Activated CD4-positive, alpha-beta T cell treated with anti-CD3 and anti-CD28 coated beads, Interleukin-2, amount 10 ng/mL, durations not matched to agents 24 days and 14 days (primary cell): ENCODE measurements at regions of chr12 and their contacts with region 1.

Region 1: DNA sequence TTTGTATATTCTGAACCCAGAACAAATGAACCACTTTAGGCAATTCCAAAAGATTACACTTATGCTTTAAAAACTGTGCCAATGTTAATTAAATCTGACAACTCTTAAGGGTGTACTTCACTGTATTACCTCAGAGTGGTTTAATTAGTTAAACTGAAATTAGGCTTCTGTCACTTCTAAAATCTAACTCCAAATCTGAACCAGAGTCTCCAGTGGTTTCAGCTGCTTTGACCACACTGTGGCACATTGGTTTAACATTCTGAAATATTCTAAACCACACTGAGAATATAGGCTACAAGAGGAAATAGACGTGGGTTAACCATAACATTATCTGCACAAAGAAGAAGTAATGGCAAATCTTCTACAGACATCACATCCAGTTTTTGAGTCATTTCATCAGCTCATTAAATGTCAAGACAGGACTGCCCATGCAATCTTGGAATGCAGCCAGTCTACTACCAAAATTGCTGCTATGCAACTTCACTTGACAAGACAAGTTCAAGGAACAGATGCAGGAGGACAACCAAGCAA is 94.8 kb downstream of the LRP6 start:
- DNase-seq: peak; percentile 74
- H3K4me3 Mint-ChIP-seq: no peak overlapping the region
- H3K27ac Mint-ChIP-seq: peak overlapping the region; percentile 64
- H3K4me1 Mint-ChIP-seq: peaks cover 12% of the 10 kb centered on the region
- H3K27me3 Mint-ChIP-seq: peaks cover 51% of the 10 kb centered on the region

Region 2: DNA sequence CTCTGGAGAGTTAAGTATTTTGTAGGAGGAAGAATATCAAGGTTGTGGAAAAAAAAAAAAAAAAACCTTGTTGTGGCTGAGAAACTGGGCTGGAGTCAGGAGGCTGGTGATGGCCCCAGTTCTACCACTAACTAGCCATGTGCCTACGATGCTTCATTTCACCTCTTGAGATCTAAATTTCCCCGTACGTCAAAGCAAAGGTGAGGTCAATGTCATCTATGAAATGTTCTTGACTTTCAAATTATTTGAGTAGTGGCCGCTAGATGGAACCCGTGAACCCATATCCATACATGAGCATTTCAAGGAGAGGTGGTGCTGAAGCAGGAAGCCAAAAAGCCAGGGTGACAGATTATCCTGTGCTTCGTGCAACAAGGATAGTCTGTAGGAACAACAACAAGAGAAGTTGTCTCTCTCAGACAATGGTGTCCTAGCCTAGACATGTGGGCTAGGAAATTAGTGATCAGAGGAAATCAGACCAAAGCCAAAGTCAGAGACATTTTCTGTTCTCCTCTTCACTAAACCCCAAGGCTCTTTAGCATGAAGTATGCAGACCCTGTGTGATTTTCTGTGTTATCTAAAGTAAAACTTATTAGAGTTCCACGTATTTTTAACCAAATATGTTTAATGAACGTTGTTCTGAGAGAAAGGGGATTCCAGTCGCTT is 618.1 kb before region 1 on chr12:
- intact Hi-C with region 1: loop called (anchors 10 kb)
- DNase-seq: peak; percentile 88
- H3K4me3 Mint-ChIP-seq: peak overlapping the region; percentile 26
- H3K27ac Mint-ChIP-seq: no peak overlapping the region
- H3K4me1 Mint-ChIP-seq: peaks cover 22% of the 10 kb centered on the region
- H3K27me3 Mint-ChIP-seq: peaks cover 18% of the 10 kb centered on the region

Region 3: DNA sequence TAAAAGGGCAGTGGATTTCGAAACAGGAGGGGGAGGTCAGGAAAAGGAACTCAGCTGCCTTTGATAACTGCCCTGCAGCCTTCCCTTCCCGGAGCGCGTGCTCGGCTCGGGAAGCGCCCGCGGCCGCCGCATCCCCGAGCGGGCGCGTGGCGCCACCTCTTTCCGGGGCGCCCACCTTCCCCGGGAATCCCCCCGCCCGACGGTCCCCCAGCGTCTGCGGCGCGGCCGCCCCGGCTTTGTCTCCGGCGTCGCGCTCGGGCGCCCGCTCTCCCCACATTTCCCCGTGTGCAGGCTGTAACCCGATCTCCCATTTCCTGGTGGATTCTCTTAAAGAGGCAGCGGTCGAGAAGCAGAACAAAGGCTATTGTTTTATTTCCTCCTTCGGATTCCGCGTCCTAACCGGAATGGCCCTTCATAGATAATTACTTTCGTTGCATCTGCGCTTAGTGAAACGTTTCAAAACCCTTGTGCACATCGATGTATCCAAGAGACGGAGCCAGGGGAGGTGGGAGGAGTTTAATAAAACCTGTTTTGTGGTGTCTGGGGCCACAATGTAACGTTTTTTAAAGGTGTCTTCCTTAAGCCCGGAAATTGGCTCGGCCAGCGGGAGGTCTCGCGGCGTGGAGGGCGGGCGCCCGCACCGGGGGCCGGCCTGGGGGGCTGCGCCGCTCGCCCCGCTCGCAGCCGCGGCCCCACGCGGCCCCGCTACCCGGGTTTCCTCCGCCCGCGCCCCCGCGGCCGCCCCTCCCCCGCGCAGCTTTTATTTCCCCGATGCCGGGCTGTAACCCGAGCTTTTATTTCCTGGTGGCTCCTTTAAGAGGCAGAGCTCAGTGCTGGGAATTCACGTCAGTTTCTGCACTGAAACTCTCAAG is 523.0 kb before region 1 on chr12 and contains the start of gene ETV6:
- intact Hi-C with region 1: no loop called
- DNase-seq: peak; percentile 94
- H3K4me3 Mint-ChIP-seq: peak within 1 kb of the TSS; percentile 91
- H3K27ac Mint-ChIP-seq: peak within 1 kb of the TSS; percentile 97
- H3K4me1 Mint-ChIP-seq: peaks cover 25% of the 10 kb centered on the region
- H3K27me3 Mint-ChIP-seq: no peaks in the 10 kb centered on the region
- total RNA-seq, gene ETV6: 114 and 119 TPM in 2 replicates

Region 4: GRCh38 chr12:12201274-12201758 is 29.3 kb after region 1 on chr12:
- intact Hi-C with region 1: loop called (anchors 1 kb)
- DNase-seq: no peak
- H3K4me3 Mint-ChIP-seq: no peak overlapping the region
- H3K27ac Mint-ChIP-seq: no peak overlapping the region
- H3K4me1 Mint-ChIP-seq: peaks cover 5% of the 10 kb centered on the region
- H3K27me3 Mint-ChIP-seq: peaks cover 23% of the 10 kb centered on the region

Region 5: DNA sequence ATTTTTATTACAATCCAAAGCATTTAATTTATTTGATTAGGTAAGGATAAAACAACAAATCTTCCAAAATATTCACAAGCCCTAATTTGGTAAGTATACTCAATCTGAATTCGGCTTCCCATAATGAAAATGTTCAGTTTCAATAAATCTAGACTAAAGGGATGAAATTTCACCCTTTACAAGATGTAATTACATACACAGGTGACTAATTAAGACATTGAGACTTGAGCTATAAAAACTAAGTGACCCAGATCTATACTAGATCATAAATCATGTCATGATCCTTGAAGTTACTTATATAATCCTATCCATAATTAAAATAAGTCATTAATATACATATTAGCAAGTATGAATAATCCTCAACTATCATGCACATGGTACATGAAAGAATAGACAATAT is 58.2 kb after region 1 on chr12:
- intact Hi-C with region 1: no loop called
- DNase-seq: no peak
- H3K4me3 Mint-ChIP-seq: no peak overlapping the region
- H3K27ac Mint-ChIP-seq: no peak overlapping the region
- H3K4me1 Mint-ChIP-seq: no peaks in the 10 kb centered on the region
- H3K27me3 Mint-ChIP-seq: peaks cover 8% of the 10 kb centered on the region

Region 6: GRCh38 chr12:12327802-12328201 is 155.7 kb after region 1 on chr12:
- intact Hi-C with region 1: loop called (anchors 10 kb)
- DNase-seq: peak; percentile 75
- H3K4me3 Mint-ChIP-seq: no peak overlapping the region
- H3K27ac Mint-ChIP-seq: no peak overlapping the region
- H3K4me1 Mint-ChIP-seq: peaks cover 18% of the 10 kb centered on the region
- H3K27me3 Mint-ChIP-seq: peaks cover 12% of the 10 kb centered on the region